ENCODE measurements at regions of chr1 and their contacts with region 1.

Region 1: GRCh38 chr1:46303038-46303871 is at the starts of genes LRRC41 and UQCRH:
- DNase-seq: peak; percentile 94
- ATAC-seq: peak; percentile 80
- H3K4me3 Mint-ChIP-seq: peak within 1 kb of the TSS; percentile 93
- H3K27ac Mint-ChIP-seq: peak within 1 kb of the TSS; percentile 99
- H3K4me1 Mint-ChIP-seq: peaks cover 37% of the 10 kb centered on the region
- H3K27me3 Mint-ChIP-seq: no peaks in the 10 kb centered on the region
- total RNA-seq, gene LRRC41: 36.8 to 38.8 TPM
- total RNA-seq, gene UQCRH: 250 to 260 TPM

Region 2: GRCh38 chr1:46247436-46248121 is 55.7 kb before region 1 on chr1 and contains the start of gene RAD54L:
- POLR2A ChIA-PET with region 1: interaction called, 18 read pairs
- DNase-seq: peak; percentile 93
- ATAC-seq: peak; percentile 92
- H3K4me3 Mint-ChIP-seq: peak within 1 kb of the TSS; percentile 96
- H3K27ac Mint-ChIP-seq: peak within 1 kb of the TSS; percentile 95
- H3K4me1 Mint-ChIP-seq: peaks cover 26% of the 10 kb centered on the region
- H3K27me3 Mint-ChIP-seq: no peaks in the 10 kb centered on the region
- total RNA-seq, gene RAD54L: 47.9 to 50.8 TPM

Region 3: GRCh38 chr1:46262508-46262907 is 40.7 kb before region 1 on chr1:
- POLR2A ChIA-PET with region 1: no interaction called
- DNase-seq: no peak
- ATAC-seq: no peak
- H3K4me3 Mint-ChIP-seq: no peak overlapping the region
- H3K27ac Mint-ChIP-seq: no peak overlapping the region
- H3K4me1 Mint-ChIP-seq: peaks cover 4% of the 10 kb centered on the region
- H3K27me3 Mint-ChIP-seq: no peaks in the 10 kb centered on the region

Region 4: GRCh38 chr1:46285730-46286477 is 17.4 kb before region 1 on chr1:
- POLR2A ChIA-PET with region 1: interaction called, 21 read pairs
- DNase-seq: peak; percentile 63
- ATAC-seq: peak; percentile 92
- H3K4me3 Mint-ChIP-seq: peak overlapping the region; percentile 25
- H3K27ac Mint-ChIP-seq: peak overlapping the region; percentile 89
- H3K4me1 Mint-ChIP-seq: peaks cover 35% of the 10 kb centered on the region
- H3K27me3 Mint-ChIP-seq: no peaks in the 10 kb centered on the region

Region 5: GRCh38 chr1:46340404-46341221 is 37.4 kb after region 1 on chr1 and contains the start of gene NSUN4:
- POLR2A ChIA-PET with region 1: interaction called, 21 read pairs
- DNase-seq: peak; percentile 86
- ATAC-seq: peak; percentile 89
- H3K4me3 Mint-ChIP-seq: peak within 1 kb of the TSS; percentile 100
- H3K27ac Mint-ChIP-seq: peak within 1 kb of the TSS; percentile 99
- H3K4me1 Mint-ChIP-seq: peaks cover 34% of the 10 kb centered on the region
- H3K27me3 Mint-ChIP-seq: no peaks in the 10 kb centered on the region
- total RNA-seq, gene NSUN4: 23.2 to 24.9 TPM